ENCODE measurements at regions of chr6 and their contacts with region 1.

Region 1: DNA sequence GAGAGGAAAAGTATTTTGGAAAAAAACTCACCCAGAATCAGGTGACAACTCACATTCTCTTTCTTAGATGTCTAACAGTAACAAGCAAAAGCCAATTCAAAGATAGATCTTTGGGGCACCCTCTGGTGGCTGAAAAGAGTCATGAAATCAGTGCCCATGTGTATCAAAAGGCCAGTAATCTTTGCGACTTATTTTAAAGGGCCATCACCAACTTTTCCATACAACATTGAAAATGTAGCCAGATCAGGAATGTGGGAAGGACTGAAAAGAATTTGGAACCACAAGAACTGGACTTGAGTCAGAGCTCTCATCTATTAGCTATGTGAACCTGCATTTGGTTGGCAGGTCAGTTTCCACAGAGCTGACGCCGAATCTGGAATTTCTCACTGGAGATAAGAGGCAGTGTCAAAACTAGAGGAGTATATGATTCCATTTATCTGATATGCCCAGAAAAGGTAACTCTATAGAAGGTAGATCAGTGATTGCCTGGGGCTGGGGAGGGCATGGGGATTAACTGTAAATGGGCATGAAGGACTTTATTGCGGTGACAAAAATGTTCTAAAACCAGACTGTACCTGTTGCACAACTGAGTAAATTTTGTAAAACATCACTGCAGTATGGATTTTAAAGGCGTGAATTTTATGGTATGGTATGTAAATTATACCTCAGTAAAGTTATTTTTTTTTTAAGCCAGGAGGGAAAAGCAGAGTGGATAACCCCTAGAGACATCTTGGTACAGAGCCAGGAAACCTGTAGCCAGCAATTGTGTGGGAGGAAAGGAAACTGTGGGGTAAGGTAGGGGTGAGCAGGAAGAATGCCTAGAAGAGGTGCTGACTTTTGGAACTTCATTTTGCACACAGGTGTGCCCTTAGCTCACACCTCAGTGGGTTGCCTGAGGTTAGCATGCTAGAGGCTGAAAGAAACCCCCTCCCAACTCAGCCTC is 117.1 kb upstream of the ASF1A start:
- DNase-seq: peak in 4 of 5 donors; percentile 53 to 86 (median 74)
- H3K4me3 ChIP-seq: no peak overlapping the region
- H3K27ac ChIP-seq: no peak overlapping the region
- H3K4me1 ChIP-seq: no peaks in the 10 kb centered on the region
- H3K27me3 ChIP-seq: no peaks in the 10 kb centered on the region
- CTCF ChIP-seq: peak; percentile 63

Region 2: GRCh38 chr6:118283766-118284165 is 493.1 kb before region 1 on chr6:
- intact Hi-C with region 1: loop called (anchors 10 kb)
- DNase-seq: peak in 3 of 5 donors; percentile 23 to 79 (median 57)
- H3K4me3 ChIP-seq: no peak overlapping the region
- H3K27ac ChIP-seq: no peak overlapping the region
- H3K4me1 ChIP-seq: no peaks in the 10 kb centered on the region
- H3K27me3 ChIP-seq: no peaks in the 10 kb centered on the region
- CTCF ChIP-seq: peak; percentile 41

Measured in kidney (tissue), 22 donors.